Cardiac septum (tissue), 1 donor: ENCODE measurements at regions of chr1 and their contacts with region 1.

Region 1: DNA sequence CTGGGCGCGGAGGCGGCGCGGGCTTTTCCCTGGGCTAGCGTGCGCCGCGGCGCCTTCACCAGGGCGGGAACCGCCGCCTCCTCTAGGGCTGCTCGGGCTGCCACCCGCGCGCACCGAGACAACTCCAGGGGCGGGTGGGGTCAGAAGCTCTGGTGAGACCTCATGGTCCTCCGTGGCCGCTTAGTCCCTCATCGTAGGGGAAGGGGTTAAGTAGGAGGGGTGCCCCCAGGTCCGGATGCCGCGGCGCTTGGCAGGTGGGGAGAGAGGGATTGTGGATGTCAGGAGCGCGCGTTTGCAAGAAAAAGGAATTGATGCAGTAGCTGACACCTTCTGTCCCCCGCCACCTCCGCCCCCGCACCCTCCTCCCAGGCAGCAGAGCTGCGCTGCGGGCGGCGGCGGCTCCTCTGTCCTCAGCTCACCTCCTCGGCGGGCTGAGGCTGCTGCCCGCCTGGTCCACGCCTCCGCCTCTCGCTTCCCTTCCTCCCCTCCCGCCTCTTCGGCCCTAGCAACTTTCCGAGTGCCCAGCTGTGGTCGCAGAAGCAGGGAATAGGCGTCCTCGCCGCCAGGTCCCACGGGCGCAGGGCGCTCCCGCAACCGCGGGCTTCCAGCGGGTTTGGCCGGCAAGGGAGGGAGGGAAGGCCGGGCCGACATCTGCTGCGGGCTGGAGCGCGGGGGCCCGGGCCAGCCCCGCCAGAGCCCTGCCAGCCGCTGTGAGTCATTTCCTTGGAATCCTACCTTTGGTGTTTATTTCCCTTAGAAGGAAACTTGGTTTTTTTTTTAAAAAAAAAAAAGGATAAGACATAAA is 822 bp downstream of the SERTAD4 start:
- DNase-seq: no peak

Region 2: GRCh38 chr1:209641832-209642172 is 591.6 kb before region 1 on chr1:
- intact Hi-C with region 1: no loop called
- DNase-seq: peak; percentile 93

Region 3: DNA sequence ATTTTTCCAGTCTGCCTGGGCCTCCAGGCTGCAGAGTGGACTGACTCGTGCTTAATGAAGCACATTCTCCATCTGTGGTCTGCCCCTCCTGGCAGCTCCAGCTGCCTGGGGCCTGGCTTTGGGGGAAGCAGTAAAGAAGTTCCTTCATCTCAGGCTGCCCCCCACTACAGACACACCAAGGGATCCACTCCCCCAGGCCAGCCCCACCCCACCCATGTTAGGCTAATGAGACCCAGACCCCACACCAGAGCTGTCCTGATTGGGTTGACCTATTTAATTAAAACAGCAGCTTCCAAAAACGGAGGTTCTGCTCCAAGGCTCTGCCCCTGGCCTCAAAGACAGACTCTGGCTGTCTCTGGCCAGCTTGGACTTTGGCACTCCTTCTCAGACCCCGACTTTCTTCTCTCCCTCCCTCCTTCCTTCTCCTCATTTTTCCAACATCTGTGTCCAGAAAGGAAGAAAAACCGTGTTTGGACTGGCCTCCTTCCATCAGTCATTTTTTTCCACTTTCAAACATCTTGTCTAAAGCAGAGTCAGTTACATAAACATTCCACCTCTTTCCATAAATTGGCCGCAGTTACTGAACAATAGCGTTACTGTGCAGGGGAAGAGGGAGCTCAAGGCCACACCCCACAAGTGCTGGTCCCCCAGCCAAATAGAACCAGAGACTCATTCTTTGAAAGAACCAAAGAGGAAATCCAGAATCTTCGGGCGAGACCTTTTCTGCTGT is 28.9 kb after region 1 on chr1:
- intact Hi-C with region 1: loop called (anchors 2 kb)
- DNase-seq: no peak

Region 4: DNA sequence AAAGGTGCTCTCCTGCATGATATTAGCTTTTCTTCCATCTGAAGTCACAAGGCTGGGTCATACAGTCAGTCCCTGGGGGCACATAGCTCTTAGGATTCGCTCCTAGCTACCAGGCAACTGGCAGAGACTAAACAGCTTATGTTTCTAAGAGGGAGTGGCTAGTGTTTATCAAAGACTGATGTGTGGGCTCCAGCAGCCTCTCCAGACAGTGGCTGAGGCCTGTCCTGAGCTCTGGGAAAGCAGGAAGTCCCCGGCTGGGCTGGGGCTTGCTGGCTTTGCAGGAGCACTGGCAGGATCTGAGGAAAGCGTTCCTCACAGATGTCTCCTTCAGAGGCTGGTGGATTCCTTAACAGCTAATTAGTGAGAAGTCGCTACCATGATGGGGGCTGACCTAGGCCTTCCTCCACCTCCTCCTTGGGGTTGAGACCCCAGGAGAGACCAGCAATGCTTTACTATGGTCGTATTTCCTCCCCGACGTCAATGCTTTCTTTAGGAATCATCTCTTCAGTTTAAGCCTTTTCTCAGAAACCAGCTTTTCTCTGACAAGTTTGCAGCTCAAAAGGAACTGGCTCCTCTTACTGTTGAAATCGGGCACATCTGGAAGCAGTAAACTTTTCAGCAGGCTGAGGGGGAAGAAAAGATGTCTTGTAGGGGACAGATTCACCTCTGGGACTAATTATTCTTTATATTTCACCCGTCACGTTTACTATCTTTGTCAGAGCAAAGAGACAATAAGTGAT is 61.8 kb after region 1 on chr1:
- intact Hi-C with region 1: loop called (anchors 1 kb)
- DNase-seq: no peak

Region 5: GRCh38 chr1:210301615-210302000 is 68.2 kb after region 1 on chr1:
- intact Hi-C with region 1: loop called (anchors 2 kb)
- DNase-seq: no peak

Region 6: DNA sequence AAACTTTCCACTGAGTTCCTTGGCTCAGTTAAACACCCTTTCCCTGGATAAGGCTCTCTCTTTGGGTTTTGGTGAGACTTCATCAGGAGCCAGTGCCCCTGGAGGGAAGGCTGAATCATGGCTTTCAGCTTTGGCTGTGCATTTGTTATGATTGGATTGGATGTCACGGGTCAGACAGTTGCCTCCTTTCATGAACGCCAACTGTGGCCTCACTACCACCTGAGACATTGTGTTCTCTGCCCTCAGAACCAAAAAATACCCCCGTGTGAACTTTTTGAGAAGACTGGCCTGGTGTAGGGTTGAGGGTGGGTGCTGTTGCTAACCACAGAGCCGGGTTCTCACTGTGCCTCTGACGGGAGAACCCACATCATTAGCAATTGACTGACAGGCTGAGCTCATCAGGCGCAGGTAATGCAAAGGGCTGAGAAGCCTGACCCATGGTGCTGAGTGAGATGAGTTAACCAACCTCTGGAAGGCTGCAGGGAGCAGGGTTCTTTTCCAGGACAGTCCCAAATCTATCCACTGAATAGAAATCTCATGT is 160.9 kb after region 1 on chr1:
- intact Hi-C with region 1: loop called (anchors 10 kb)
- DNase-seq: no peak